ENCODE measurements at regions of chr16 and their contacts with region 1.

Region 1: GRCh38 chr16:10521681-10522274 is 58.6 kb downstream of the EMP2 start:
- DNase-seq: peak; percentile 65 to 90
- H3K4me3 ChIP-seq: no peak overlapping the region
- H3K27ac ChIP-seq: no peak overlapping the region
- H3K4me1 ChIP-seq: peaks cover 4 to 25% (median 18%) of the 10 kb centered on the region in 4 donors
- H3K27me3 ChIP-seq: no peaks in the 10 kb centered on the region
- CTCF ChIP-seq: peak in 5 of 7 experiments; percentile 52 to 93 (median 82)
- EP300 ChIP-seq: no peak
- POLR2A ChIP-seq: no peak

Region 2: GRCh38 chr16:10356870-10357842 is 164.6 kb before region 1 on chr16:
- intact Hi-C with region 1: no loop called
- DNase-seq: peak in 1 of 2 donors; percentile 49
- H3K4me3 ChIP-seq: no peak overlapping the region
- H3K27ac ChIP-seq: no peak overlapping the region
- H3K4me1 ChIP-seq: no peaks in the 10 kb centered on the region
- H3K27me3 ChIP-seq: peaks cover 0 to 11% (median 0%) of the 10 kb centered on the region in 3 donors
- CTCF ChIP-seq: no peak
- EP300 ChIP-seq: no peak
- POLR2A ChIP-seq: no peak

Region 3: GRCh38 chr16:10729104-10730048 is 207.6 kb after region 1 on chr16:
- intact Hi-C with region 1: loop called (anchors 5 kb)
- DNase-seq: no peak
- H3K4me3 ChIP-seq: no peak overlapping the region
- H3K27ac ChIP-seq: no peak overlapping the region
- H3K4me1 ChIP-seq: no peaks in the 10 kb centered on the region
- H3K27me3 ChIP-seq: no peaks in the 10 kb centered on the region
- CTCF ChIP-seq: no peak
- EP300 ChIP-seq: no peak
- POLR2A ChIP-seq: no peak

Measured in stomach (tissue), 19 donors.